PC-9 (cell line): ENCODE measurements at regions of chr16 and their contacts with region 1.

Region 1: GRCh38 chr16:24580665-24581064 is 41.3 kb downstream of the RBBP6 start:
- DNase-seq: no peak
- H3K4me3 ChIP-seq: no peak overlapping the region
- H3K27ac ChIP-seq: no peak overlapping the region
- H3K4me1 ChIP-seq: peaks cover 7% of the 10 kb centered on the region
- H3K27me3 ChIP-seq: no peaks in the 10 kb centered on the region
- CTCF ChIP-seq: peak; percentile 68

Region 2: DNA sequence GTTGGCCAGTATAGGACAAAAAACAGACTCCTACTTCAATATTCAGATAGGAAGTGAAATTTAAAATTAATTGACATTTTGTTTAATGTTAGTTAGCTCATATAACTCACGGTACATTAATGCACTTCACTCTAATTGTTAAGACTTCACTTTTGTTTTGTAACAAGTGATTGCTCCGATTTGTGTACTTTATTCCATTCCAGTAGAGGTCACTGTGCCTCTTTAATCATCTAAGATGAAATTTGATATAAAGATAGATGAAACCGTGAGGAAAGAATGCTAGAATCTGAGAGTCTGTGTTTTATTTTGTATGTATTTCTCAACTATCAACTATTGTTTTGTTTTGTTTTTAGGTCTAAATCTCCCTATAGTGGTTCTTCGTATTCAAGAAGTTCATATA is 12.3 kb before region 1 on chr16:
- CTCF ChIA-PET with region 1: no interaction called
- POLR2A ChIA-PET with region 1: no interaction called
- intact Hi-C with region 1: no loop called
- DNase-seq: peak in 1 of 2 experiments; percentile 44
- H3K4me3 ChIP-seq: no peak overlapping the region
- H3K27ac ChIP-seq: no peak overlapping the region
- H3K4me1 ChIP-seq: no peaks in the 10 kb centered on the region
- H3K27me3 ChIP-seq: no peaks in the 10 kb centered on the region
- CTCF ChIP-seq: peak; percentile 59

Region 3: GRCh38 chr16:24748242-24748641 is 167.6 kb after region 1 on chr16:
- CTCF ChIA-PET with region 1: no interaction called
- POLR2A ChIA-PET with region 1: no interaction called
- intact Hi-C with region 1: loop called (anchors 10 kb)
- DNase-seq: peak; percentile 40 to 59
- H3K4me3 ChIP-seq: no peak overlapping the region
- H3K27ac ChIP-seq: peak overlapping the region; percentile 42
- H3K4me1 ChIP-seq: peaks cover 15% of the 10 kb centered on the region
- H3K27me3 ChIP-seq: no peaks in the 10 kb centered on the region
- CTCF ChIP-seq: no peak